HAP-1 (cell line): ENCODE measurements at regions of chr3 and their contacts with region 1.

Region 1: GRCh38 chr3:46895204-46895660 is 17.7 kb downstream of the PTH1R start:
- DNase-seq: peak in 1 of 2 experiments; percentile 86
- H3K4me3 ChIP-seq: no peak overlapping the region
- H3K4me1 ChIP-seq: no peaks in the 10 kb centered on the region
- H3K27me3 ChIP-seq: no peaks in the 10 kb centered on the region

Region 2: DNA sequence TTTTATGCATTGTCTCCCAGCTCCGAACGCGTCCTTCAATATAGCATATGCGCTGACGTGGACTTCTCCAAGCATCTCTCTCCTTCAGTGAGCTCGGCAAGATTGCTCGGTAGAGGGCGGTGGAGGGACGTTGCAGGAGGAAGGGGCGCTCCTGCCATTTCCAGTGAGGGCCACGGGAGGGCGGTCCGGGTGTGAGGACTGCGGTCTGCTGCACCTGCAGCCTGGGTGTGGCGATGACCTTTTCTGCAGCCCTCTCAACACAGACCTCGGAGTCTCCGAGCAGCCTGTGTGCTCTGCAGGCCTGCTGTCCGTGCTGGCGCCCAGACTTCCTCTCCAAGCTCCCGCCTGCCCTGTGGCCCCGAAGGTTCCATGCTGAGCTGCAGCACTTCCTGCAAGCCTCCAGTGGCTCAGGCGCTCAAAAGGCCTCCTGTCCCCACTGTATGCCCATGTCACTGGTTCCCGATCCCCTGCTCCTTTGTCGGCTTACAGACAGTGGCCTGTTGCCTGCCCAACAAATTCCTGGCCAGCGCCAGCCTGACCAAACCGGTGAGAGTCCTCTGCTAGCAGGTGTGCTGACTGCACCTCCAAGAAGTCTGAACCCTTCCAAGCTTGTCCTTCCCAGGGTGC is 406.4 kb before region 1 on chr3:
- in situ Hi-C with region 1: loop called (anchors 10 kb)
- DNase-seq: peak; percentile 90 to 99
- H3K4me3 ChIP-seq: no peak overlapping the region
- H3K4me1 ChIP-seq: peaks cover 4% of the 10 kb centered on the region
- H3K27me3 ChIP-seq: no peaks in the 10 kb centered on the region

Region 3: DNA sequence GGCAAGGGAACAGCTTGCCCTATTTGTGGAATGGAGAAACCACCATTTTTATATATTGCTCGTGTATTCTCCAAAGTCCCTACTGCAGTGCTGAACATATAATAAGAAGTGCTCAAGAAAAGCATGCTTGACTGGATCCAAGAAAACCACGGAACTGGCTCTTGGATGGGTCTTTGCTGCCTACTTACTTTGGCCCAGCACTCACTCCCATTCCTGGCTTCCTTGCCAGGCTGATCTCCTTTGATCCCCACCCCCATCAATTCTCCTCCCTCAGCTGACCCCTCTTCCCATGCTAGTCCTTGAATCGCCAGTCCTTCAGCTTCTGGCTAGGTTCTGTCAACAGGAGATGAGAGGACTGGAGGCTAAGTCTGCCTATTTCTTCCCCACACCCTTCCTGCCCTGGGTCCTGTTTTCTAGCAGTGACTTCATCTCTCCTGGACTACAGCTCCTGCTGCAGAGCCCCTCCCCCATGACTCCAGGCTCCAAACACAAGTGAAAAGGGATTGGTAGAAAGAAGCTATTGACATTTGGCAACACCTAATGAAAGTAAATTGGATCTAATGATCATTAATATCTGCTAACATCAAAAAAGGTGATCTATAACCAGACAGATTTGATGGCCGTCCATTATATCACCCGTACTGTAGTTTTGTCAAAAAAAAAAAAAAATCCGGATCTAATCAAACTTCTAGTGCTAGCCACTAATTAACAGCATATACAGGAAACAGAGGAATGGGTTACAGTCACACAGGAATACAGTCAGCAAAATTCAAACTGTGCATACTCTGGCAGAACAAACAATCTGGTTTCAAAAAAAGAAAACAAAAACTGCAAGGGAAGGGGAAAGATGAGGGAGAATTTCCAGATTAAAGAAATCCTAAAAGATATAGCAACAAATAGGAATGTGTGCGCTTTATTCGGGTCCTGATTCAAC is 275.1 kb before region 1 on chr3:
- in situ Hi-C with region 1: no loop called
- DNase-seq: no peak
- H3K4me3 ChIP-seq: no peak overlapping the region
- H3K4me1 ChIP-seq: no peaks in the 10 kb centered on the region; the same call in 1 of the 2 replicates
- H3K27me3 ChIP-seq: no peaks in the 10 kb centered on the region

Region 4: DNA sequence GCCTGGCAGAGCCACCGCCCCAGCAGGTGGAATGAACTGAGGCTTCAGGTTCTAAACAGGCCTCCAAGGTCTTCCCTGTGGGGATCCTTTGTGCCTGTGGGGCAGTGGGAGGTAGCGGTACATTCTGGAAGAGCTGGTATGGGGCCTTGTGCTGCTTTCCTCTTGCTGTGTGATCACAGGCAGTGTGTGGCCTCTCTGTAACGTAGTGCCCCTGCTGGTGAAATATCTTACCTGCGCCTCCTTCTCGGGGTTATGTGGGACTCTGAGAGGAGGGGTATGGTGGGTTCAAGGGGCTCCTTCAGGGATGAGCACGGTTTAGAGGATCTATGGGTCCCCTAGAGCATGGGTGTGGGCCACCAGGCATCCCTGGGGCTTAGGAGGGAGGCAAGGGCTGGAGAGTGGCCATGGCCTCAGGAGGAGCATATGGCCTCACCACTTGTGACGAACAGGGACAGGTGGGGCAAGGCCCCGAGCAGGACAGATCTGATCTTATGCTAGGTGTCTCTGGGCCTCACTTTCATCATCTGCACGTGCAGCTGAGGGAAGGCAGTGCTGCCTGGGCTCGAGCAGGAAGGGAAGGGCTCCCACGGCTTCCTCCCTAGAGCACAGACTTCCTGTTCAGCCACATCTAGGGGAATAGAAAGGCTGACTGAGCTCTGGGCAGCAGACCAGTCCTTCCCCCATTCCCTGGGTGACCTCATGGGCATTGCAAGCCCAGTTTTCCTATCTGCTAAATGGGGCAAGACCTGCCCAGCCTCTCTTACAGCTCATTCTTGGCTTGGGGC is 199.9 kb before region 1 on chr3:
- in situ Hi-C with region 1: loop called (anchors 5 kb)
- DNase-seq: peak; percentile 11 to 58
- H3K4me3 ChIP-seq: no peak overlapping the region
- H3K4me1 ChIP-seq: peaks cover 12% of the 10 kb centered on the region; the same call in 1 of the 2 replicates
- H3K27me3 ChIP-seq: no peaks in the 10 kb centered on the region

Region 5: DNA sequence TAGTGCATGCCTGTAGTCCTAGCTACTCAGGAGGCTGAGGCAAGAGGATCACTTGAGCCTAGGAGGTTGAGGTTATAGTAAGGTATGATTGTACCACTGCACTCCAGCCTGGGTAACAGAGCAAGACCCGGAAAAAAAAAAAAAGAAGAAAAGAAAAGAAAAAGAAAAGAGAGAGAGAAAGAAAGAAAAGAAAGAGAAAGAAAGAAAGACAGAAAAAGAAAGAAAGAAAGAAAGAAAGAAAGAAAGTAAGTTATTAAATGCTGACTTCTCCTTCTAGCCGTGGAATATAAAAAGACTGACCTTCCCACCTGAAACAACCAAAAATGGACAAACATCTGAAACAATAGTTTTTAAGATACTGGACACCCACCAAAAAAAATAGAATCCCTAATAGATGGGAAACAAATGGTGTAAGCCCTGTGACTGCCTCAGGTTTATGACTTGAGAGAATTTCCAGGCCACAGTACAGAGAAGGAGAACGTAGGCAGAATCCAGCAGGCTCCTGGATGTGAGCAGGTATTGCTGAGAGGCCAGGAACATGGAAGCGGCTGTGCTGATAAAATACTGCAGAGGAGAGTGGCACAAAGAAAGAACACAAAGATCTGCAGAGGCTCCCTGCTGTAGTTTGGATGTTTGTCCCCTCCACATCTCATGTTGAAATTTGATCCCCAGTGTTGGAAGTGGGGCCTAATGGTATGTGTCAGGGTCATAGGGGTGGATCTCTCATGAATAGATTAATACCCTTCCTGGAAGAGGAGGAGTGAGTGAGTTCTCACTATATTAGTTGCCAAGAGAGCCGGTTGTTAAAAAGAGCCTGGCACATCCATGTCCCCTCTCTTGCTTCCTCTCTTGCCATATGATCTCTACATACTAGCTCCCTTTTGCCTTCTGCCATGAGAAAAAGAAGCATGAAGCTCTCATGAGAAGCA is 135.7 kb before region 1 on chr3:
- in situ Hi-C with region 1: no loop called
- DNase-seq: no peak
- H3K4me3 ChIP-seq: no peak overlapping the region
- H3K4me1 ChIP-seq: no peaks in the 10 kb centered on the region
- H3K27me3 ChIP-seq: no peaks in the 10 kb centered on the region

Region 6: DNA sequence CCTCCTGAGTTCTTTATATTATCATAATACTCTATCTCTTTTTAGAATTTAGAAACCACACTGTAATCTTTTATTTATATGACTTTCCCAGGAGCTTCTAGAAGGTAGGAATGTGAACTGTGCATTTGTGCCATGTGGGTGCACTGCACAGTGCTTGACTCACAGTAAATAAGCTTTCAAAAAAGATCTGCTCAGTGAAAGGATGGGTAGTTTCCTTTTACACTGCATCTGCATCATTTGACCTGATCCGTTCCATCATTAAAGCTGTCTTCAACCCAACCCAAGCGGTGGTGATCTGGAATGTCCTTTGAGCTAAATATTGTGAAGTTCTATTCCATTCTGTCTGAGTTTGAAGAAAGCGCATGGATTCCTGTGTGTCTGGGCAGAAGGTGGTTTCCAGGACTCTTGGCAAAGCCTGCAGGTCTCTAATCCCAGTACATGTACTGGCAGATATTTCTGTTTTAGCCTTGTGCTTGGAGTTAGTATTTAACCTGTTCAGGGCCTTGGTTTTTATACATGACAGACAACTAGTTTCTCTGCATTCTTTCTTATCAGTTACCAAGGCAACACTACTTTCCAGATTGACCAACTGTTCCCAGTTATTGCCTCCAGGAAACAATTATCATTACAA is 1004.4 kb after region 1 on chr3:
- in situ Hi-C with region 1: no loop called
- DNase-seq: peak in 1 of 2 experiments; percentile 37
- H3K4me3 ChIP-seq: no peak overlapping the region
- H3K4me1 ChIP-seq: peaks cover 5% of the 10 kb centered on the region
- H3K27me3 ChIP-seq: no peaks in the 10 kb centered on the region